Activated B cell treated with CpG ODN at 0.5 μM for 24 hours (primary cell): ENCODE measurements at regions of chr1 and their contacts with region 1.

Region 1: DNA sequence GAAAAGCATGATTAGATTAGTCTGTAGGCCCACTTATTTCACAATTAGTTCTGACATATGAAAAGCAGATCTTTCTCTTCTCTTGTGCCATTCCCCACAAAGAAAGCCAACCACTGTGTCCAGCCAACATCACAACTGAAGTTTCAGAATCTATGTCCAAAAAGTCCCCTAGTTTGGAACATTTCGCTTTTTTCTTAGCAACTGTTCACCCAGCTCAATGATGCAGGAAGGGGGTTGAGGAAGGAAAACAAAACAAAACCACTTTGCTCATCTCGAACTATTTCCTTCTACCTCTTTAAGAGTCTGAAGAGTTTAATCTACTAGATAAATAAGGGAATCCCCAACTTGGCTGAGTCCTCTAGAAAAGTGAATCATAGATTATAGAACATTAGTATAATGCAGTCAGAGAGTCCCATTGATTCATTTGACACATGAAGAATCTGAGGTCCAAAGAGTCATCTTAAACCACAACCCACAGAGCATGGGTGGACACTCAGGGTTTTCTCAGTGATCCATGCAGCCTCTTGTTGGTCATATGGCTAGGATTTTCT is 159.3 kb upstream of the SGIP1 start:
- DNase-seq: no peak
- ATAC-seq: peak; percentile 79
- H3K4me3 Mint-ChIP-seq: peak overlapping the region; percentile 39
- H3K27ac Mint-ChIP-seq: peak overlapping the region; percentile 93
- H3K4me1 Mint-ChIP-seq: peaks cover 94% of the 10 kb centered on the region
- H3K27me3 Mint-ChIP-seq: no peaks in the 10 kb centered on the region
- CTCF ChIP-seq: no peak

Region 2: DNA sequence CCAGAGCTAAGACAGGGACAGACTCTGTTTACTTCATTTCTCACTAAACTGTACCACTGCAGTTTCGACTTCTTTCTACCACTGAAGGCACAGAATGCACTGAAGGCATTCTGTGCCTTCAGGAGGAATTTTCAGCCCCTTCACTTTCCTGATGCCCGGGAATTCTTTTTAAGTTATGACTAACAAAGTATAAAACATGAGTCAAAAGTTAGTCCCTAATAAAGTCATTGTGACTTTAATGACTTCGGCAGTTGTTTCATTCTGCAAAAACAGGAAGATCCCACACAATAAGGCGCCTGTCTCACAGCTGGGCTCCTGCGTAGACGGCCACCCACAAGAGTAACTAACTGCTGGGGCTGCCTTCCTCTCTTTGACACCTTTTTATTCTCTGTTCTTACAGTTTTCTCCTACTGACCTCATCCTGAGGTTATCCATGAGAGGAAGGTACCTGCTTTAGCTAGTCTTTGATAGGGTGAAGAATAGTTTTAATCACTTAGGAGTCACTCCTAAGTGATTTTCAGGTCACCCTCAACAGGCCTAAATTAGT is 24.6 kb before region 1 on chr1:
- CTCF ChIA-PET with region 1: interaction called, 5 read pairs
- POLR2A ChIA-PET with region 1: interaction called, 20 read pairs
- intact Hi-C with region 1: no loop called
- DNase-seq: no peak
- ATAC-seq: peak; percentile 80
- H3K4me3 Mint-ChIP-seq: peak overlapping the region; percentile 72
- H3K27ac Mint-ChIP-seq: peak overlapping the region; percentile 89
- H3K4me1 Mint-ChIP-seq: peaks cover 97% of the 10 kb centered on the region
- H3K27me3 Mint-ChIP-seq: no peaks in the 10 kb centered on the region
- CTCF ChIP-seq: no peak

Region 3: GRCh38 chr1:66360285-66360724 is 14.3 kb before region 1 on chr1:
- CTCF ChIA-PET with region 1: interaction called, 8 read pairs
- POLR2A ChIA-PET with region 1: interaction called, 15 read pairs
- intact Hi-C with region 1: loop called (anchors 1 kb)
- DNase-seq: no peak
- ATAC-seq: peak; percentile 64
- H3K4me3 Mint-ChIP-seq: no peak overlapping the region
- H3K27ac Mint-ChIP-seq: peak overlapping the region; percentile 77
- H3K4me1 Mint-ChIP-seq: peaks cover 84% of the 10 kb centered on the region
- H3K27me3 Mint-ChIP-seq: no peaks in the 10 kb centered on the region
- CTCF ChIP-seq: no peak

Region 4: DNA sequence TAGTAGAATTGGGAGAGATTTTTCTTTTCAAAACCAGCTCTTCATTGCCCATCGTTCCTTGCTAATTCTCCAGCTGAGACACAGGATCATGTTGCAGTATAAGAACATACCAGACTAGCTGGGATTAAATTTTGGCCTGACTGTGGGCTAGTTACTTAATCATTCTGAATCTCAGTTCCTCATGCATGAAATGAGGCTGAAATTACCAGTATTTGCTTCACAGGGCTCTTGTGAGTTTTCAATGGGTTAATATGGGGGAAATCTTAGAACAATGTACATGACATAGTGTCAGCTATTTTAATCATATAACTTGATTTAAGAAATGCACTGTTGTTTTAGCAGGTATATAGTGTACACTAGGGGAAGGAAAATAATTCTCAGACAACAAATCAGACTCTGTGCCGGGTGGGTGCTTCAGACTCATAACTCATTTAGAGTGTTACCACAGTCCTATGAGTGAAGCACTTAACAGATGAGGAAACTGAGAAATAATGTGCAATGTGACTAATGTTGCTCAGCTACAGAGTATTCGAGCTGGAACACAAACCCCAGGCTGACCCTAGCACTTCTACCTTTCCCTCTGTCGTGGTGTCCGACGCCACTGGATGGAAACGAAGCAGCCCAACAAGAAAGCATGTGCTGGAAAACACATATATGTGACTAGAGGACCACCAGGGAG is 21.7 kb after region 1 on chr1:
- CTCF ChIA-PET with region 1: interaction called, 34 read pairs
- POLR2A ChIA-PET with region 1: interaction called, 156 read pairs
- intact Hi-C with region 1: loop called (anchors 1 kb)
- DNase-seq: no peak
- ATAC-seq: peak; percentile 71
- H3K4me3 Mint-ChIP-seq: peak overlapping the region; percentile 48
- H3K27ac Mint-ChIP-seq: peak overlapping the region; percentile 74
- H3K4me1 Mint-ChIP-seq: peaks cover 81% of the 10 kb centered on the region
- H3K27me3 Mint-ChIP-seq: no peaks in the 10 kb centered on the region
- CTCF ChIP-seq: no peak

Region 5: DNA sequence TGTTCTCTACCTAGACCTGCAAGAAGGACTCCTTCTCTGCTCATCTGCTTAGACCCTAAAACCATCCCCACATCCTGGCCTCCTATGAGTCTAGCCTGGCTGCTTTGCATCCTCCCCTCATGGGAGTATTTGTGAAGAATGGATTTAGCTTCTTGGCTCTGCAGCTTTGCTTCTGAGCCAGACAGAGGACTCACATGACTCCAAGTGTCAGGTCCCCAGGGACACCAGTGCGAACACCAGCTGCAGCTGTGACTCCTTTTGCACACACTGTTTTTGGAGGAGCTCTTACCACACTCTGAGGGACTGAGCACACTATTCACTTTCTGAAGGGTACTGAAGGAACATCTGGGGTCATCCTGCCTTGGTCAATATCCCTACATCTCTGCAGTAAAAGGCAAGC is 27.6 kb after region 1 on chr1:
- CTCF ChIA-PET with region 1: interaction called, 34 read pairs
- POLR2A ChIA-PET with region 1: interaction called, 156 read pairs
- intact Hi-C with region 1: loop called (anchors 1 kb)
- DNase-seq: peak; percentile 65
- ATAC-seq: peak; percentile 86
- H3K4me3 Mint-ChIP-seq: peak overlapping the region; percentile 72
- H3K27ac Mint-ChIP-seq: peak overlapping the region; percentile 90
- H3K4me1 Mint-ChIP-seq: peaks cover 67% of the 10 kb centered on the region
- H3K27me3 Mint-ChIP-seq: no peaks in the 10 kb centered on the region
- CTCF ChIP-seq: no peak

Region 6: DNA sequence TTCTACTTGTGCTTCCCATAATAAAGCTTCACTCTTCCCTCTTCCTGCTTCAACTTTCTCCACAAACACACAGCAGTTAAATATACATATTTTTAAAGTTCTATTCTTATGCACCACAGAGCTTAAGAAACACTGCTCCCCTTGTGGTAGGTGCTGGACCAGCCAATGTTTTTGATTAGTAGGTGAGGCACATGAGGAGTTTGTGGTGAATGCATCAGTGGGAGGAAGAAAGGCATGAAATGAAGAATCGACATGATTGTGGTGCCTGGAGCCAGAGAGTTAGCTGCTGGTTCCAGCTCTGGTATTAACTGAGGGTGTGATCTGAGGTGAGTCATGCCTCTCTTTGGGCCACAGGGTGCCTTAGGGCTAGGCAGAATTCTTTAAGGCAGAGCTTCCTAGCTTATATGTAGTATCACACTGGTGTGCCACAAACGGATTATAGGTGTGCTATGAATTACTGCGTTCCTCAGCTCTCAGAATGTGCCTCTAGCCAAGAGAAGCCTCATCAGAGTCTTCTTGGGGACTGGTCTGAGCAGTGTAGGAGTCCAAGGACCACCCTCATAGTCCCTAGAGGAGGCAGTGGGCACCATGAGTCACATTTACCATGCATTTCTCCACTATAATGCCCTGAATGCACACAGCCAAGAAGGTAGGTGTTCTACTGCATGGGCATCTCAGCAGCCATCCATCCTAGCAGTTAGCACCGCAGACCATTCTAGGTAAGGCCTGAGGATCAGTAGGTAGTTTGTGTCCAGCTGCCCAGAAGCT is 61.9 kb after region 1 on chr1:
- CTCF ChIA-PET with region 1: interaction called, 182 read pairs
- POLR2A ChIA-PET with region 1: interaction called, 19 read pairs
- intact Hi-C with region 1: loop called (anchors 1 kb)
- DNase-seq: no peak
- ATAC-seq: peak; percentile 65
- H3K4me3 Mint-ChIP-seq: no peak overlapping the region
- H3K27ac Mint-ChIP-seq: peak overlapping the region; percentile 63
- H3K4me1 Mint-ChIP-seq: peaks cover 38% of the 10 kb centered on the region
- H3K27me3 Mint-ChIP-seq: no peaks in the 10 kb centered on the region
- CTCF ChIP-seq: no peak

Region 7: GRCh38 chr1:67339623-67340343 is 965.1 kb after region 1 on chr1:
- CTCF ChIA-PET with region 1: no interaction called
- POLR2A ChIA-PET with region 1: no interaction called
- intact Hi-C with region 1: loop called (anchors 5 kb)
- DNase-seq: no peak
- ATAC-seq: peak; percentile 51
- H3K4me3 Mint-ChIP-seq: peak overlapping the region; percentile 62
- H3K27ac Mint-ChIP-seq: peak overlapping the region; percentile 77
- H3K4me1 Mint-ChIP-seq: peaks cover 74% of the 10 kb centered on the region
- H3K27me3 Mint-ChIP-seq: no peaks in the 10 kb centered on the region
- CTCF ChIP-seq: no peak